ENCODE measurements at regions of chr9 and their contacts with region 1.

Region 1: GRCh38 chr9:967903-968641 is 8.4 kb upstream of the DMRT3 start:
- DNase-seq: no peak
- H3K4me3 ChIP-seq: no peak overlapping the region
- H3K27ac ChIP-seq: no peak overlapping the region
- H3K4me1 ChIP-seq: peaks cover 7% of the 10 kb centered on the region
- H3K27me3 ChIP-seq: peaks cover 3% of the 10 kb centered on the region
- CTCF ChIP-seq: no peak
- EP300 ChIP-seq: no peak
- POLR2A ChIP-seq: no peak

Region 2: GRCh38 chr9:859251-859650 is 108.8 kb before region 1 on chr9:
- intact Hi-C with region 1: no loop called
- DNase-seq: no peak
- H3K4me3 ChIP-seq: no peak overlapping the region
- H3K27ac ChIP-seq: no peak overlapping the region
- H3K4me1 ChIP-seq: no peaks in the 10 kb centered on the region
- H3K27me3 ChIP-seq: no peaks in the 10 kb centered on the region
- CTCF ChIP-seq: no peak
- EP300 ChIP-seq: no peak
- POLR2A ChIP-seq: no peak

Region 3: DNA sequence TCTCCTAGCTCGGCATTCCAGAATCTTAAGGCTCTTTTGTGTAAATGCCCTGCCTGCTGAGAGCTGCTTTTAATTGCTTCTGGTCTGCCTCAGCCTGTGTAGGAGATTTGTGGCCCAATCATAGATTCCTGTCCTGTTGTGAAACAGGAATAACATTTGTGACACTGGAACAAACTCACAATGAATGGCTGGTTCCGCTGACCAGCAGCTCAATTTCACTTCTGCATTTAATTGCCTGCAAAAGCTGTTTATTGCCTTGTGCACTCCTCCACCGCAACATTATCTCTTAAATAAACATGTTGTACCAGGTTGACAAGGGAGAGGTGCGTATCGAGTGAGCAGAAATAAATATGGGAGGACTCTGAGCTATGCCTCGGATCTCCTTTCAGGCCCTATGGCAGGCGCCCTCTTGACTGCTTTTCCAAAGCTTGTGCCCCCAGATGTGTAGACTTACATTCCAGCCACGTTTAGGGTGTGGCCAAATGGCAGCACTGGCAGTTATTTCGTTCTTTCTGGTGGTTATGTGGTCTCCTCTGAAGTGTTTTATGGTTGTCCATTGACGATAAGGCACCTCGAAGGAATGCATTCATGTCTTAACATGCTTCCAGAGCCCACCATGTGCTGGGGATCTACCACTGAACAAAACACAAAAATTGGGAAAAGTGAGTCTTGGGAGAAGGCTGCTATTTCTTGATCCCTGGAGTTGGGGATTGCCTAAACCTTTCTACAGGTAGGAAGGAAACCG is 68.5 kb before region 1 on chr9:
- intact Hi-C with region 1: loop called in 1 of 4 experiments (anchors 10 kb)
- DNase-seq: no peak
- H3K4me3 ChIP-seq: no peak overlapping the region
- H3K27ac ChIP-seq: no peak overlapping the region
- H3K4me1 ChIP-seq: no peaks in the 10 kb centered on the region
- H3K27me3 ChIP-seq: no peaks in the 10 kb centered on the region
- CTCF ChIP-seq: no peak
- EP300 ChIP-seq: no peak
- POLR2A ChIP-seq: no peak

Measured in ovary (tissue), 10 donors.